Uterus (tissue), 4 donors: ENCODE measurements at regions of chr1 and their contacts with region 1.

Region 1: GRCh38 chr1:192609110-192610079 is 26.6 kb upstream of the RGS13 start:
- DNase-seq: peak; percentile 18 to 26
- H3K4me3 ChIP-seq: no peak overlapping the region
- H3K27ac ChIP-seq: no peak overlapping the region
- H3K4me1 ChIP-seq: peaks cover 0 to under 1% of the 10 kb centered on the region in 2 donors
- H3K27me3 ChIP-seq: no peaks in the 10 kb centered on the region
- CTCF ChIP-seq: no peak
- POLR2A ChIP-seq: no peak

Region 2: GRCh38 chr1:192477630-192478029 is 131.8 kb before region 1 on chr1:
- intact Hi-C with region 1: loop called (anchors 10 kb)
- DNase-seq: no peak
- H3K4me3 ChIP-seq: no peak overlapping the region
- H3K27ac ChIP-seq: no peak overlapping the region
- H3K4me1 ChIP-seq: no peaks in the 10 kb centered on the region
- H3K27me3 ChIP-seq: no peaks in the 10 kb centered on the region
- CTCF ChIP-seq: peak; percentile 54 to 79 (median 66)
- POLR2A ChIP-seq: no peak